Transverse colon (tissue), 4 donors: ENCODE measurements at regions of chr3 and their contacts with region 1.

Region 1: GRCh38 chr3:183904833-183905780 is 20.4 kb upstream of the PARL start:
- DNase-seq: no peak
- H3K4me3 ChIP-seq: no peak overlapping the region
- H3K27ac ChIP-seq: no peak overlapping the region
- H3K4me1 ChIP-seq: no peaks in the 10 kb centered on the region
- H3K27me3 ChIP-seq: no peaks in the 10 kb centered on the region
- CTCF ChIP-seq: no peak
- EP300 ChIP-seq: no peak
- POLR2A ChIP-seq: no peak

Region 2: GRCh38 chr3:184022323-184022722 is 117.2 kb after region 1 on chr3:
- in situ Hi-C with region 1: loop called in 1 of 4 experiments (anchors 5 kb)
- intact Hi-C with region 1: no loop called
- DNase-seq: no peak
- H3K4me3 ChIP-seq: no peak overlapping the region
- H3K27ac ChIP-seq: no peak overlapping the region
- H3K4me1 ChIP-seq: peaks cover 0 to 4% (median 2%) of the 10 kb centered on the region in 4 donors
- H3K27me3 ChIP-seq: no peaks in the 10 kb centered on the region
- CTCF ChIP-seq: no peak
- EP300 ChIP-seq: no peak
- POLR2A ChIP-seq: no peak

Region 3: GRCh38 chr3:184050217-184050847 is 145.2 kb after region 1 on chr3:
- in situ Hi-C with region 1: no loop called
- intact Hi-C with region 1: no loop called
- DNase-seq: peak; percentile 12
- H3K4me3 ChIP-seq: no peak overlapping the region
- H3K27ac ChIP-seq: no peak overlapping the region
- H3K4me1 ChIP-seq: no peaks in the 10 kb centered on the region
- H3K27me3 ChIP-seq: no peaks in the 10 kb centered on the region
- CTCF ChIP-seq: no peak
- EP300 ChIP-seq: no peak
- POLR2A ChIP-seq: no peak